Posterior vena cava (tissue), 2 donors: ENCODE measurements at regions of chr3 and their contacts with region 1.

Region 1: GRCh38 chr3:138782755-138783154 is 52.0 kb downstream of the PIK3CB start:
- DNase-seq: no peak

Region 2: DNA sequence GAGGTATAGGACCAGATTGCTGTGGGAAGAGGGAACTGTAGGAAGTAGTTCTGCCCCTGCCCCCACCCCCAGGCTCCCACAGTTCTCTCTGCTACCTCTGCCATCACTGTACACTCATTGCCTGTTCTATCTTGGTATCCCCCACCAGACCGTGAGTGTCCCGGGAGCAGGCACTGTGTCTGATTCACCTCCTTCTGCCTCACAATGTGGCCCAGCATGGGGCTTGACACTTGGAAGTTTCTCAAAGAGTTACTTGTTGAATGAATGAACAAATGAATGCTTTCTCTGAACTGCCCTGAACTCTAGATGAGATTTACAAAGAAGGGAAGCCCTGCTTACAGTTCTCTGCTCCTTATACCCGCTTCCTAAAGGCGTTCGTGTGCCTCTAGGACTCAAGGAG is 79.0 kb after region 1 on chr3:
- intact Hi-C with region 1: loop called in 1 of 2 experiments (anchors 2 kb)
- DNase-seq: no peak